H1 (cell line): ENCODE measurements at regions of chr6 and their contacts with region 1.

Region 1: GRCh38 chr6:8481718-8482117 is 46.4 kb upstream of the SLC35B3 start:
- DNase-seq: no peak
- H3K4me3 ChIP-seq: no peak overlapping the region
- H3K27ac ChIP-seq: no peak overlapping the region
- H3K4me1 ChIP-seq: no peaks in the 10 kb centered on the region
- H3K27me3 ChIP-seq: no peaks in the 10 kb centered on the region
- CTCF ChIP-seq: peak in 2 of 3 experiments; percentile 47 to 63; a peak in 2 of 4 replicates
- EP300 ChIP-seq: no peak
- POLR2A ChIP-seq: no peak
- RAD21 ChIP-seq: peak; percentile 62 to 72

Region 2: DNA sequence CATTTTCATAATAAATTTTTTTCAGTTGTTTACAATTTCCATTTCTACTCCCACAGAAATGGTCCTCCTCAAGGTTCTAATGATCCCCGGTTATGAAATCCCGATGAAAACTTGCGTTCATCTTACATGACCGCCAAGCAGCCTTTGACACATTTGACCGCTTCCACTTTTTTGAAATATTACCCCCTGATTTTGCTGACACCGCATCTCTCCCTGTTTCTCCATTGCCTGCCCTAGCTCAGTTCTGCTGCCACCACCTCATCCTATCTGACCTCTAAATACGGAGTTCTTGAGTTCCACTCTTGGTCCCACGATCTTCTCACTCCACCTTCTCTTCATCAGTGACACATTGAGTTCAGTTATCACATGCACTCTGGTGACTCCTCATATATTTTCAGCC is 120.5 kb before region 1 on chr6:
- CTCF ChIA-PET with region 1: no interaction called
- POLR2A ChIA-PET with region 1: no interaction called
- DNase-seq: no peak
- H3K4me3 ChIP-seq: no peak overlapping the region
- H3K27ac ChIP-seq: no peak overlapping the region
- H3K4me1 ChIP-seq: no peaks in the 10 kb centered on the region
- H3K27me3 ChIP-seq: no peaks in the 10 kb centered on the region
- CTCF ChIP-seq: no peak
- EP300 ChIP-seq: no peak
- POLR2A ChIP-seq: no peak
- RAD21 ChIP-seq: no peak

Region 3: DNA sequence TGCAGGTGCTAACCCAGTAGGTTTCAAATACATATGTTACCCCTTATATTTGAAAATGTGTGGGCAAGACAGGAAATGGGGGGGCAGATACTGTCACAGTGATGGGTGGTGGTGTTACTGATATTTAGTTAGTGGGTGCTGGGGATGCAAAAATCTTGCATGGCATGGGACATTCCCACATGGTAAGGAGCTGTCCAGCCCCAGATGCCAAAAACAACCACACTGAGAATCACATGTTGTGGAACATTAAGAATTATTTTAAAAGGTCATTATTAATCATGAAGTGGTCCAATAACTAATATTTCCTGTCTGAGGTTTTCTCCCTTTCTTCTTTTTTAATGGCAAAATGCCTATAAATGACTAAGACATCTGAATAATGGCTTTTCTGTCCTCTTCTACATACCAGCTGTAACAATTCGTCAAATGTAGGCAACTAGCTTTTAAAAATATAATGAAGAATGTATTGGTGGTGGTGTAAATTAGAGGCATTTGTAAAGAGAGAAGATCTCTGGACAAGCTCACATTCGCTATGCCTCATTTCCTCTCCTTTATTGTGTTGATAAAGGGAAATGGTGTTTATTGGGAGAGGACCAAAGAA is 10.9 kb after region 1 on chr6:
- CTCF ChIA-PET with region 1: interaction called, 11 read pairs
- POLR2A ChIA-PET with region 1: no interaction called
- DNase-seq: no peak
- H3K4me3 ChIP-seq: no peak overlapping the region
- H3K27ac ChIP-seq: no peak overlapping the region
- H3K4me1 ChIP-seq: 0 out of 7 replicates have a peak, but pooled peaks cover 0 to 2% (median 0%) of the 10 kb centered on the region in 4 experiments
- H3K27me3 ChIP-seq: no peaks in the 10 kb centered on the region
- CTCF ChIP-seq: no peak
- EP300 ChIP-seq: no peak
- POLR2A ChIP-seq: no peak
- RAD21 ChIP-seq: no peak